Aorta (tissue), 5 donors: ENCODE measurements at regions of chr11 and their contacts with region 1.

Region 1: GRCh38 chr11:15650105-15650938 is 535.6 kb downstream of the INSC start:
- DNase-seq: peak; percentile 96 to 98
- ATAC-seq: peak; percentile 99
- H3K4me3 ChIP-seq: peak overlapping the region; percentile 24 to 31
- H3K27ac ChIP-seq: peak overlapping the region in 1 of 2 donors; percentile 35
- H3K4me1 ChIP-seq: no peaks in the 10 kb centered on the region
- H3K27me3 ChIP-seq: no peaks in the 10 kb centered on the region

Region 2: GRCh38 chr11:15493921-15494620 is 156.3 kb before region 1 on chr11:
- intact Hi-C with region 1: no loop called
- DNase-seq: no peak
- ATAC-seq: no peak
- H3K4me3 ChIP-seq: no peak overlapping the region
- H3K27ac ChIP-seq: no peak overlapping the region
- H3K4me1 ChIP-seq: no peaks in the 10 kb centered on the region
- H3K27me3 ChIP-seq: no peaks in the 10 kb centered on the region

Region 3: GRCh38 chr11:15800111-15800800 is 149.9 kb after region 1 on chr11:
- intact Hi-C with region 1: loop called in 1 of 2 experiments (anchors 5 kb)
- DNase-seq: peak in 1 of 2 donors; percentile 89
- ATAC-seq: peak; percentile 51
- H3K4me3 ChIP-seq: no peak overlapping the region
- H3K27ac ChIP-seq: peak overlapping the region in 1 of 2 donors; percentile 50
- H3K4me1 ChIP-seq: peaks cover 2 to 16% of the 10 kb centered on the region in 2 donors
- H3K27me3 ChIP-seq: no peaks in the 10 kb centered on the region

Region 4: DNA sequence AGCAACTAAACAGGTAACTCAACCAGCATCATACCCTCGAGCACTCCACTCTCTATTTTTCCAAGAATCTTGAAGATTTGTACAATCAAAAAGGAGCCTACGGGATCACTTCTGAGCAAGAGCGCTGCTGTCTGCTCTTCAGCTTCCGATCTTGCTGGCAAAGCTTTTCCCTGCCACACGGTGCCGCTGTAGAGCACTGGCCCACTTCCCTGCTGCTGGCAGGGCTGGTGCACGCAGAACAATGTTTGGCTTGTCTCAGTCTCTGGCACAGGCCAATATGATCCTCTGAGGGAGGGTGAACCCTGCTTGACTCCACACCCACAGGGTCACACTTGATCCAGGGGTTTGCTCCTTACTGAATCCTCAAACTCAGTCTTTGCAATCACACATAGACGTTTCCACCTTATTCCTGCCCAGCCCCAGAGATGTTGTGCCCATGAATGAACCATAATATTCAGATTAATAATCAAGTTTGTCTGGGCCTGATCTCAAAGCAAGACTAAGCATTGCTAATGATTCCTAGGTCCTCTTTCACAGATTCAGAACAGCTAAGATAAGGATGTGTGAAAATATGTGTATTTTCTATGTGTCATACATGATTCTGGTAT is 169.5 kb after region 1 on chr11:
- intact Hi-C with region 1: loop called in 1 of 2 experiments (anchors 10 kb)
- DNase-seq: peak; percentile 79 to 89
- ATAC-seq: peak; percentile 82
- H3K4me3 ChIP-seq: no peak overlapping the region
- H3K27ac ChIP-seq: no peak overlapping the region
- H3K4me1 ChIP-seq: peaks cover 4 to 7% of the 10 kb centered on the region in 2 donors
- H3K27me3 ChIP-seq: no peaks in the 10 kb centered on the region

Region 5: GRCh38 chr11:15988693-15989231 is 338.4 kb after region 1 on chr11:
- intact Hi-C with region 1: loop called in 1 of 2 experiments (anchors 5 kb)
- DNase-seq: no peak
- ATAC-seq: peak; percentile 38
- H3K4me3 ChIP-seq: no peak overlapping the region
- H3K27ac ChIP-seq: no peak overlapping the region
- H3K4me1 ChIP-seq: no peaks in the 10 kb centered on the region
- H3K27me3 ChIP-seq: no peaks in the 10 kb centered on the region

Region 6: DNA sequence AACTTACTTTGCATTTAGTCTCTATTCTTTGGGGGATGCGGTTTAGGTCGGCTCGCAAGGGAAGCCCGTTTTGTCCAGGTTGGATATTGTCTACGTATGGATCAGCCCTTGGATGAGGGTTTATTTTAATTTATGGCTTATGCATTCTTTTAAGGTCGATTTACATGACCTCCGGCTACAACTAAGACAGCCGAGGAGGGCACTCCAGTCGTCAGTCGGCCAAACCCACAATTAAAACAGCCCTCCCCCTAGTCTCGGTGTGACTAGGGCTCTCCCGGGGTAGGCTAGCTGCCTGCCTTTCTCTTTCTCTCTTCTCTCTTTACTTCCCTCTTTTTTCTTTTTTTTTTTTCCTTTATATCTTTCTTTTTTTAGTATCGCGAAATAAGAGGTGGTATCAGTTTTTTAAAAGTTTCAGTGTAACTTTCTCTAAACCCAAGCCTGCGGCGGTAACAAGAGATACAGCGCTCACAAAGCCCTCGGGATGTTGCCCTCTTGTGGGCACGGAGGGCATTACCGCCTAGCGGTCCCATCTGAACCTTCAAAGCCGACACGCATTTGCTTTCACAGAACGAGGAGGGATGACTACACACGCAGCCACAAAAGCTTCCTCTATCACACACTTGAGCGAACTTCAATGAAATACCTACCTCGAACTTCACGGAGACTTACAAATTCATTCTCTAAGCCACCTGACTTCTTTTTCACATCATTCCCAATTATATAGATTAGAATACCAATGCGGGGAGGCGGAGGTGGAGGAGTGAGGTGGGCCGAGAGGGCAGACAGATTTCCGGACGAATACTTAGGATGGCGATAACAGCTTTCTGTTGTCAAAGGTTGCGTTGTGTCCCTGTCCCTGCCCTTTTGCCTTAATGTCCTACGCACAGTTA is 955.8 kb after region 1 on chr11:
- intact Hi-C with region 1: loop called (anchors 2 to 5 kb)
- DNase-seq: peak; percentile 91 to 95
- ATAC-seq: peak; percentile 91
- H3K4me3 ChIP-seq: peak overlapping the region; percentile 14 to 48
- H3K27ac ChIP-seq: peak overlapping the region in 1 of 2 donors; percentile 58
- H3K4me1 ChIP-seq: no peaks in the 10 kb centered on the region
- H3K27me3 ChIP-seq: no peaks in the 10 kb centered on the region